Gastrocnemius medialis (tissue), 4 donors: ENCODE measurements at regions of chr2 and their contacts with region 1.

Region 1: GRCh38 chr2:38581193-38582147 is 21.3 kb downstream of the HNRNPLL start:
- DNase-seq: no peak
- ATAC-seq: peak; percentile 76 to 88
- H3K4me3 ChIP-seq: no peak overlapping the region
- H3K27ac ChIP-seq: peak overlapping the region in 1 of 4 donors; percentile 2
- H3K4me1 ChIP-seq: peaks cover 2 to 17% of the 10 kb centered on the region in 2 donors
- H3K27me3 ChIP-seq: no peaks in the 10 kb centered on the region
- CTCF ChIP-seq: peak; percentile 68 to 81 (median 70)
- POLR2A ChIP-seq: no peak

Region 2: DNA sequence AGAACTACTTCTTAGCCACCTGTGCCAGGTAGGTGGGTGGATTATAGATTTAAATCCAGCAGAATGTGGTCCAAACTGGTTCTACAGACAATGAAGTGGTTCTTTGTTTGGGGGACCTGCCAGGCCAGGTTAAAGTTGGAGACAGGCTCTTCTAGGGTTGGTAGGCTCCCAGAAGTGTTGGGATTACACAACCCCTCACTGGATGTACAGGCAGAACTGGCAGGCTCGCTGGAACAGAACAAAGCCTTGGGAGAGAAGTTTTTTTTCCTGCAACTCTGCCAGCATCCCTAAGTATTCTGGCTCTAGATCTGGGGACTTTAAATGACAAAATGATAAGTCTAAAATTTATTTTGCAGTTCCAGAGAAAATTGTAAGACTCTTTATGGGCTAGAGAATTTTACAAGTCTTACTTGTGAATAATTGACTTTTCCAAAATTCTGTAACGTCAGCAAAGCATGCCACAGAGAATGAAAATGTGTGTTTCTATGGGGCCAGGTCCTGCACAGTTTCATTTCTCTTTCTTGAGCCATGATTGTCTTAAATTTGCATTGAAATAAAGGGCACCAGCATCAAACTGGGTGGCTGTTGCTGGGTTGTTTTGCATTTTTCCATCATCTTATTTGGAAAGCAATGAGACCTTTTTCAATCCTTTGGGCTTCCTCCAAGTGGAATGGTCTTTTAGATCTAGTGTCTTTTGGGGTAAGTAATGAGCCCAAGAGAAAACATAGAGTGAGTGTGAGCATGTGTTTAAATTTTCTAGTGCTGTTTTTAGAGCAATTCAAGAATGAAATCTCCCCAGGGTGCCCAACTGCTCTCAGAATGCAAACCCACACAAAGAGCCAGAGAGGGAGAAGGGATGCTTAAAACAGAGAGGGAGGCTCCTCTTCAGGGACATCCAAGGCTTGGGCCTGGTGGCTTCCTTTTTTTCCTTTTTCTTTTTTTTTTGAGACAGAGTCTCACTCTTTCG is 172.0 kb before region 1 on chr2:
- in situ Hi-C with region 1: no loop called
- intact Hi-C with region 1: no loop called
- DNase-seq: peak; percentile 9 to 47
- ATAC-seq: peak; percentile 72 to 77
- H3K4me3 ChIP-seq: no peak overlapping the region
- H3K27ac ChIP-seq: peak overlapping the region in 1 of 4 donors; percentile 64
- H3K4me1 ChIP-seq: peaks cover 11 to 37% of the 10 kb centered on the region in 2 donors
- H3K27me3 ChIP-seq: no peaks in the 10 kb centered on the region
- CTCF ChIP-seq: no peak
- POLR2A ChIP-seq: no peak

Region 3: DNA sequence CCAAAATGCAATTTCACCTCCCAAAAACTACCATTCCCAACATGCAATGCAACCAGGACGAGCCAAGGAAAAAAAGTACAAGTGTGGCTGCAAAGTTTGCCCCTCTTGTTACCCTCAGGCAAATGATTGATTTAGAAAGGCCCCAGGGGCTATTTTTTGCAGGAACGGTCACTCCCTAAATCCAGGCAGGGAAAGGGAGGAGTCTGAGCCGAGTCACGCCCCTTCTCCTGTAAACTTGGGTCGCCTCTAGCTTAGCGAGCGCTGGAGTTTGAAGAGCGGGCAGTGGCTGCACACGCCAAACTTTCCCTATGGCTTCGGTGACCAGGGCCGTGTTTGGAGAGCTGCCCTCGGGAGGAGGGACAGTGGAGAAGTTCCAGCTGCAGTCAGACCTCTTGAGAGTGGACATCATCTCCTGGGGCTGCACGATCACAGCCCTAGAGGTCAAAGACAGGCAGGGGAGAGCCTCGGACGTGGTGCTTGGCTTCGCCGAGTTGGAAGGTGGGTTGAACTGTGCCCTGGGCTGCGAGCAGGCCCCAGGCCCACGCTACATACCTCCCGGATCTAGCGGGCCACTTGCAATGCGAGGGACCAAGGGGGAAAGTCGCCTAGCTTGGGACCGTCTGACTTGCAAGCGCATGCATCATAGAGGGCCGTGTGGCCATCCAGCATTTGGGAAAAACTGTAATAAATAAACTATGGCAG is 84.5 kb after region 1 on chr2 and contains the start of gene GALM:
- in situ Hi-C with region 1: no loop called
- intact Hi-C with region 1: loop called (anchors 5 kb)
- DNase-seq: peak; percentile 79 to 89
- ATAC-seq: peak; percentile 81 to 96
- H3K4me3 ChIP-seq: peak within 1 kb of the TSS; percentile 63 to 76 (median 75)
- H3K27ac ChIP-seq: peak within 1 kb of the TSS; percentile 73 to 81 (median 78)
- H3K4me1 ChIP-seq: peaks cover 13 to 23% of the 10 kb centered on the region in 2 donors
- H3K27me3 ChIP-seq: no peaks in the 10 kb centered on the region
- CTCF ChIP-seq: no peak
- POLR2A ChIP-seq: peak; percentile 38 to 70
- total RNA-seq, gene GALM: 5.3 to 16.9 (median 14.9) TPM

Region 4: DNA sequence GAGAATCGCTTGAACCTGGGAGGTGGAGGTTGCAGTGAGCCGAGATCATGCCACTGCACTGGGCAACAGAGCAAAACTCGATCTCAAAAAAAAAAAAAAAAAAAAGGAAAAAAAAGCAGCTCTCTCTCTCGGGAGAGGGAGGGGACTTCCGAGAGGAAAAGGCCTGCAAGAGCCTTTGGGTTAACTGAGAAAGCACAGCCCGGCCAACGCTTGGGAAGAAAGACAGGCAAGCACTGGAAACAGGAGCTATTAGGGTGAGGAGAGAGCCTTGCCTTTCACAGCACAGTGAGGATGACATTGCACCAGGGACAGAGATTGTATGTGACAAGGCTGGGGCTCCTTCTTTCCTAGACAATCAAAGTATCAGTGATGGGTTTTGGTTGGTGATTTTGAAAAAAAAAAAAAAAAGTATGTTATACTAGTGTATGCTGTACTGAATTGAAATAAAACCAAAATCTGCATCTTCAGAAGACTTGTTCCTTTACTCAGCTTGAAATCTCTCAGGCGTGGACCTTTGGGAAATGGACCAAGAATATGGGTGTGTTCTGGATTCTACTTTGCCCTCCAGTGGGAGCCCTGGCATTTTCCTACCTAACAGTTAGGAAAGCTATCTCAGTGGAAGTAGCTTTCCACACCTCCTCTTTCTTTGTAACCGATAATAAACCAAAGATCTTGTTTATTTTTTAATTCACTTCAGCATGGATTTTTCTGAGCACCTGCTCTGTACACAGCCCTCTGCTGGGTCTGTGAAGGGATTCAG is 153.0 kb after region 1 on chr2:
- in situ Hi-C with region 1: loop called in 1 of 4 experiments (anchors 10 kb)
- intact Hi-C with region 1: no loop called
- DNase-seq: no peak
- ATAC-seq: no peak
- H3K4me3 ChIP-seq: no peak overlapping the region
- H3K27ac ChIP-seq: peak overlapping the region in 1 of 4 donors; percentile 18
- H3K4me1 ChIP-seq: peaks cover 0 to 8% of the 10 kb centered on the region in 2 donors
- H3K27me3 ChIP-seq: no peaks in the 10 kb centered on the region
- CTCF ChIP-seq: no peak
- POLR2A ChIP-seq: no peak